ENCODE measurements at regions of chr1 and their contacts with region 1.

Region 1: GRCh38 chr1:1406817-1407635 is at the start of gene MRPL20:
- DNase-seq: peak; percentile 88 to 99 (median 93)
- ATAC-seq: peak; percentile 96
- H3K4me3 ChIP-seq: peak within 1 kb of the TSS; percentile 100
- H3K27ac ChIP-seq: peak within 1 kb of the TSS; percentile 89
- H3K4me1 ChIP-seq: peaks cover 14 to 50% of the 10 kb centered on the region in 2 experiments
- H3K27me3 ChIP-seq: no peaks in the 10 kb centered on the region
- CTCF ChIP-seq: 0 out of 6 replicates have a peak, but pooled peaks of 1 of the 3 experiments have one; percentile 9
- EP300 ChIP-seq: no peak; the same call in 1 of the 2 replicates
- POLR2A ChIP-seq: peak; percentile 98
- RAD21 ChIP-seq: peak; percentile 1 to 22; a peak in 1 of 4 replicates
- polyA plus RNA-seq, gene MRPL20: 570 to 671 TPM

Region 2: GRCh38 chr1:1387098-1388077 is 19.6 kb before region 1 on chr1:
- CTCF ChIA-PET with region 1: no interaction called
- POLR2A ChIA-PET with region 1: interaction called, 10 read pairs
- in situ Hi-C with region 1: no loop called
- intact Hi-C with region 1: no loop called
- DNase-seq: peak in 1 of 4 experiments; percentile 42
- ATAC-seq: no peak
- H3K4me3 ChIP-seq: no peak overlapping the region
- H3K27ac ChIP-seq: no peak overlapping the region
- H3K4me1 ChIP-seq: peaks cover 6 to 12% of the 10 kb centered on the region in 2 experiments; a peak in 4 of 5 replicates
- H3K27me3 ChIP-seq: no peaks in the 10 kb centered on the region
- CTCF ChIP-seq: no peak
- EP300 ChIP-seq: no peak
- POLR2A ChIP-seq: no peak
- RAD21 ChIP-seq: no peak

Region 3: DNA sequence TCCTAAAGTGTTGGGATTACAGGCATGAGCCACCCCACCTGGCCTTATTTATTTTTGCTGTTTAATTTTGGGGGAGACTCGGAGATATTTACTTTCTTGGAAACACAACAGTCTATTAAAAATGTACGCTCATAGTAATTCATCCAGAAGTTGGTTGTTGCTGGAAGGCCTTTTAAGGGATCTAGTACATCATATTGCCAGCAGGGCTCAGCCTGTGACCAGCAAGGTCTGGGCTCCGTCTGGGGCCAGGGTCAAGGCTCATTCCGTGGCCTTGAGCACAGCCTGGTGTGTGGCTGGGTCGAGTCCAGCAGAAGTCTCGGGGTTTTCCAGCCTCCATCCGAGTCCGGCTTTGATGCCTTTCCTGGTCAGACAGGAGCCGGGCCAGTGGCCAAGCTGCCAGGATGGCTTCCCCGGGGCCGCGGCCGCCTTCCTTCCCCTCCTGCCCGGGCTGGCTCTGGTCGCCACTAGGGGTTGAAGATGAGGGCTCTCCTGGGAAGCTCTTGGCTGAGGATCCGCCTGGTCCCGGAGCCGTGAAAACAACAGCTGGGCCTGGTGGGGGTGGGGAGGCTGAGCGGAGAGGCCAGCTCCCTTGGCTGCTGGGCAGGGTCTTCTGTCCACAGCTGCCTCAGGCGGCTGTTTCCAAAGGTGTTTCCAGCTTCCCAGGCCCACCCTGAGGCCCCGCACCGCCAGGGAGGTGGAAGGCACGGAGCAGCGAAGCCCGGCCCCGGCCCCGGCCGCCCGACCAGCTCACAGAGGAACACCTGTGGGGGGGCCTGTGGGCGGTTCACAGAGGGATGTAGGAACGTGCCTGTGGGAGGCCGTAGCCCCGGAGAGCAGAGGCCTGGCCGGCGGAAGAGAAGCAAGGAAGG is 23.3 kb after region 1 on chr1:
- CTCF ChIA-PET with region 1: no interaction called
- POLR2A ChIA-PET with region 1: interaction called, 11 read pairs
- in situ Hi-C with region 1: no loop called
- intact Hi-C with region 1: no loop called
- DNase-seq: peak in 1 of 4 experiments; percentile 28
- ATAC-seq: no peak
- H3K4me3 ChIP-seq: no peak overlapping the region
- H3K27ac ChIP-seq: no peak overlapping the region
- H3K4me1 ChIP-seq: peaks cover 45 to 83% of the 10 kb centered on the region in 2 experiments
- H3K27me3 ChIP-seq: no peaks in the 10 kb centered on the region
- CTCF ChIP-seq: no peak
- EP300 ChIP-seq: no peak
- POLR2A ChIP-seq: no peak
- RAD21 ChIP-seq: no peak

Region 4: DNA sequence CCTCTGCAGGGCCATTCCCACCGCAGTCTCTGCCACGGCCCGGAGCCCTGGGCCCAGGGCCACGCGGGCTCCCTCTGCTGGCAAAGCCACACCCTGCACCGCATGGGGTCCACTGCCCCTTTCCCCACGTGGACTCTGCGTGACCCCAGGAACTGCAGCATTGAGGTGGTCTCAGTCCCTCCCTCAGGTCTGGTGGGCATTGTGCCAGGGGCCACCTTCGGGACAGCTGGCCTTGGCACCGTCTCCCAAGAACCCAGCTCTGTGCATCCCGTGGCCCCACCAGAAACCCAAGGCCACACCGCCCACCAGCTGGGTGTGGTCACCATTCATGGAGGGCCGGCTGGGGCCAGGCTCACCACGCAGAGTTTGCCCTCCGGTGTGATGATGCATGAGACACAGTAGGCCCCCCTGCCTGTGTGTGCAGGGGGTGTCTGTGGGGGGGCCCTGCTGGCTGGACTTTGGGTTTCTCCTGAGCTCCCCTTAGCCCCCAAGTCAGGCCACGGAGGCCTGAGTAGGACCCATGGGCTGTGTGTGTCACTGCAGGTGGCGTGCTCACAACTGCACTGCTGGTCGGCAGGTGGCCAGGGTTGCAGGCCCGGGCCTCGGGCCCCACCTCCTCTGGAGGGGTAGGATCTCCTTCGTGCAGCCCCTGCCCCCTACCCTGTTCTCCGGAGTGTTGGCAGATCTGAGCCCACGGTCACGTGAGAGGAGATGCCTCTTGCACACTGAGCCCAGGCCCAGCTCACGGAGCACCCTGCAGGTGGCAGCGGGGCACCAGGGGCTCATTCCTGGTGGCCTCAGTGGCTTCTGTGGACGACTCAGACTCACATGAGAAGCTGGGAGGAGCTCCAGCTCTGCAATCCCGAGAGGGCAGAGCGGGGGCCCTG is 34.2 kb after region 1 on chr1:
- CTCF ChIA-PET with region 1: no interaction called
- POLR2A ChIA-PET with region 1: interaction called, 3 read pairs
- in situ Hi-C with region 1: no loop called
- intact Hi-C with region 1: loop called (anchors 2 kb)
- DNase-seq: peak; percentile 82 to 94 (median 94)
- ATAC-seq: peak; percentile 96
- H3K4me3 ChIP-seq: no peak overlapping the region
- H3K27ac ChIP-seq: no peak overlapping the region
- H3K4me1 ChIP-seq: peaks cover 7 to 69% of the 10 kb centered on the region in 2 experiments; a peak in 4 of 5 replicates
- H3K27me3 ChIP-seq: no peaks in the 10 kb centered on the region
- CTCF ChIP-seq: peak; percentile 93 to 99 (median 96)
- EP300 ChIP-seq: no peak
- POLR2A ChIP-seq: no peak
- RAD21 ChIP-seq: peak; percentile 77 to 92

Region 5: DNA sequence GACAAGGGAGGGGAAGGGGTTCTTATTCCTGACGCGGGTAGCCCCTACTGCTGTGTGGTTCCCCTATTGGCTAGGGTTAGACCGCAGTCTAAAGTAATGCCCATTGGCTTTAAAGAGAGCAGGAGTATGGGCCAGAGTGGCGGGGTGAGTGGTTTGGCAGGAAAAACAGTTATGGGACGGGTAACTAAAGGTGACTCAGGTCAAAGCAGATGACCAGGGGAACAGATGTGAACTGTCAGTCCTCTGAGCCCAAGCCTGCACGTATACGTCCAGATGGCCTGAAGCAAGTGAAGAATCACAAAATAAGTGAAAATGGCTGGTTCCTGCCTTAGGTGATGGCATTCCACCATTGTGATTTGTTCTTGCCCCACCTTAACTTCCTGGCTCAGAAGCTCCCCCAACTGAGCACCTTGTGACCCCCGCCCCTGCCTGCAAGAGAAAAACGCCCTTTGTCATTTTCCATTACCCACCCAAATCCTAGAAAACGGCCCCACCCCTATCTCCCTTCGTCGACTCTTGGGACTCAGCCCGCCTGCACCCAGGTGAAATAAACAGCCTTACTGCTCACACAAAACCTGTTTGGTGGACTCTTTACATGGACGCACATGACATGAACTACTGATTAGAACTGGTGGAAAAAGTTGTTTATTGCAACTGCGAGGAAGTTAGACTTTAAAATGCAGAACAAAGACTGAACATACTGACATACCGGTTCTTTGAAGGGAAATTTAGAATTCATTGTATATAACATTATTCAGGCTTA is 63.8 kb after region 1 on chr1:
- CTCF ChIA-PET with region 1: no interaction called
- POLR2A ChIA-PET with region 1: no interaction called
- in situ Hi-C with region 1: no loop called
- intact Hi-C with region 1: loop called (anchors 1 kb)
- DNase-seq: peak in 2 of 4 experiments; percentile 36 to 68
- ATAC-seq: peak; percentile 6
- H3K4me3 ChIP-seq: peak overlapping the region; percentile 68
- H3K27ac ChIP-seq: peak overlapping the region; percentile 91
- H3K4me1 ChIP-seq: peaks cover 0 to 36% of the 10 kb centered on the region in 2 experiments; a peak in 3 of 5 replicates
- H3K27me3 ChIP-seq: no peaks in the 10 kb centered on the region
- CTCF ChIP-seq: no peak
- EP300 ChIP-seq: no peak
- POLR2A ChIP-seq: no peak
- RAD21 ChIP-seq: no peak

Region 6: GRCh38 chr1:1796466-1796865 is 389.4 kb after region 1 on chr1:
- CTCF ChIA-PET with region 1: no interaction called
- POLR2A ChIA-PET with region 1: no interaction called
- in situ Hi-C with region 1: no loop called
- intact Hi-C with region 1: no loop called
- DNase-seq: peak in 2 of 4 experiments; percentile 25 to 48
- ATAC-seq: peak; percentile 83
- H3K4me3 ChIP-seq: no peak overlapping the region
- H3K27ac ChIP-seq: no peak overlapping the region
- H3K4me1 ChIP-seq: peaks cover 0 to 3% of the 10 kb centered on the region in 2 experiments; a peak in 1 of 5 replicates
- H3K27me3 ChIP-seq: no peaks in the 10 kb centered on the region
- CTCF ChIP-seq: peak; percentile 50 to 57 (median 54)
- EP300 ChIP-seq: no peak
- POLR2A ChIP-seq: no peak
- RAD21 ChIP-seq: peak in 1 of 2 experiments; percentile 54; a peak in 2 of 4 replicates